CD8-positive, alpha-beta T cell (primary cell): ENCODE measurements at regions of chr4 and their contacts with region 1.

Region 1: GRCh38 chr4:177250056-177250696 is 59.5 kb upstream of the NEIL3 start:
- DNase-seq: peak; percentile 38 to 74 (median 55)
- ATAC-seq: peak; percentile 99
- H3K4me3 ChIP-seq: no peak overlapping the region
- H3K4me3 Mint-ChIP-seq: no peak overlapping the region
- H3K27ac ChIP-seq: no peak overlapping the region
- H3K27ac Mint-ChIP-seq: no peak overlapping the region
- H3K4me1 ChIP-seq: no peaks in the 10 kb centered on the region
- H3K4me1 Mint-ChIP-seq: peaks cover 11% of the 10 kb centered on the region
- H3K27me3 ChIP-seq: no peaks in the 10 kb centered on the region
- H3K27me3 Mint-ChIP-seq: peaks cover 9% of the 10 kb centered on the region
- CTCF ChIP-seq: peak; percentile 96

Region 2: DNA sequence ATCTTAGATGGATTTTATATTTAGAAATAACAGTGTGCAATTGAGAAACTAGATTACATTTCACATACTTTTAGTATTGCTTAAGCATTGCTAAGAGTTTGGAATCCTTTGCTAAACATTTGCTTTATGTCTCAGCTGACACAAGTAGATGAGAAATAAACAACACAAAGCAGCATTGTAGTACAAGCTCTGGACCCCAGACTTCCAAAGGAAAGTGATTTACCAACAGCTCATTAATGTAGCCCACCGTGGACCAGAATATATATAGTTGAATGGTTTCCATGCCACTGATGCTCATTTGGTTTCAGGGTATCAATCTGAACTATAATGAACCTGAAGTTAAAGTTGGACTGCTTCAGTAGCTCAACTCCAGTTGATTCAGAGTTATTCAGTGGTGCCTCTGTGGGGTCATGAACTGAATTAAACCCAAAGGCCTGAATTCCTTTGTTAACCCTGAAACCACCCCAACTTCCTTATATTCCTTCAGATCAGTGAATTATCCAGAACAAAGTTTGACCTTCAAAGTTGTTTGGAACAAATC is 72.6 kb before region 1 on chr4:
- CTCF ChIA-PET with region 1: no interaction called
- POLR2A ChIA-PET with region 1: no interaction called
- intact Hi-C with region 1: no loop called
- DNase-seq: no peak
- ATAC-seq: no peak
- H3K4me3 ChIP-seq: no peak overlapping the region
- H3K4me3 Mint-ChIP-seq: no peak overlapping the region
- H3K27ac ChIP-seq: no peak overlapping the region
- H3K27ac Mint-ChIP-seq: no peak overlapping the region
- H3K4me1 ChIP-seq: no peaks in the 10 kb centered on the region
- H3K4me1 Mint-ChIP-seq: no peaks in the 10 kb centered on the region
- H3K27me3 ChIP-seq: no peaks in the 10 kb centered on the region
- H3K27me3 Mint-ChIP-seq: no peaks in the 10 kb centered on the region
- CTCF ChIP-seq: no peak

Region 3: DNA sequence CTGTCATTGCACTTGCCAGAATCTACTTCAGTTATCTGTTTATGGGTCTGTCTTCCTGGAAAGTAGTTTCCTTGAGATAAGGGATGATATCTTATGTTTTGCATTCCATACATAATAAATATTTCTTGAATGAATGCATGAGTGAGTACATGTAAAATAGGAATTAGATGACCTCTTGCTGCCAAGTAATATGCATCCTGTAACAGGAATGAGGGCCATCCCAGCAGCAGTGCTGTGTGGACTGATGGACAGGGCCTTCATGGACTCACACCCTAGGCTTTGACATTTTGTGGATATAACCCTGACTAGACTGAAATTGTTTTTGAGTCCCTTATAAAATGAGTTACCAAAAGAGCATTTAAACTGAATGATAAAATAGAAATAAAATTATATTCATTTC is 17.7 kb before region 1 on chr4:
- CTCF ChIA-PET with region 1: no interaction called
- POLR2A ChIA-PET with region 1: no interaction called
- intact Hi-C with region 1: no loop called
- DNase-seq: no peak
- ATAC-seq: no peak
- H3K4me3 ChIP-seq: no peak overlapping the region
- H3K4me3 Mint-ChIP-seq: no peak overlapping the region
- H3K27ac ChIP-seq: no peak overlapping the region
- H3K27ac Mint-ChIP-seq: no peak overlapping the region
- H3K4me1 ChIP-seq: no peaks in the 10 kb centered on the region
- H3K4me1 Mint-ChIP-seq: peaks cover 9% of the 10 kb centered on the region
- H3K27me3 ChIP-seq: no peaks in the 10 kb centered on the region
- H3K27me3 Mint-ChIP-seq: no peaks in the 10 kb centered on the region
- CTCF ChIP-seq: no peak

Region 4: DNA sequence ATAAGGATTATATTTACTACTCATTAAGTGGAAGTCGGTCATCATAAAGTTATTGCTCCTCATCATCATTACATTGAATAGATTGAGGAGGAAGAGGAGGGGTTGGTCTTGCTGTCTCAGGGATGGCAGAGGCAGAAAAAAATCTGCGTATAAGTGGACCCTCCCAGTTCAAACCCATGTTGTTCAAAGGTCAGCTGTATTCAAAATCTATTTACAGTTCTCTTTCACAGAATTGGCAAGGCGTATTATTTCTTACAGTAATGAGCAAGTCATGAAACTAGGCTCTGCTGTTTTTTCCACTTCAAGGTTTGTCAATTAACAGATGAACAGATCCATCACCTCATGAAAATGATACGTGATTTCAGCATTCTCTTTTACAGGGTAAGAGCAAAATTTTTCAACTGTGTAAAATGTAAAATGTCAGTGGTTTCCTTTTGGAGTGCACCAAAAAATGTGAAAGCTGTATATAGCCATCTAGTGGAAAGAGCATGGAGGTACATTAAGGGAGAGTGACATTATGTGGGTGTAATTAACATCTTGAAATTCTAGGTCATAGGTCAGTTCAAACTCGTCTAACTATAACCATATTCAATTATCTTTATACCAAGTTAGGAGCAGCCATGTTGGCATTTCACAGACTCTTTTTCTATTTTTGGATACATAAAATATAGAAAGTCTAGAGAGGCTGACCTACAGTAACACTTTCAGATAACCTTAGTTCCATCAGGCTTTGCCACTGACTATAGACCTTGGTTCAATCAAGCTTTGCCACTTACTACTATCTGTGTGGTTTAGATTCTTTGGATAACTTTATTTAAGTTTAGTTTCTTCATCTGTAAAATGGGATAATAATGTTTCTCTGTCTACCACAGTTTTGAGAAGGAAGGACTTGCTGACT is 89.5 kb after region 1 on chr4:
- CTCF ChIA-PET with region 1: interaction called, 18 read pairs
- POLR2A ChIA-PET with region 1: no interaction called
- intact Hi-C with region 1: loop called (anchors 1 kb)
- DNase-seq: peak in 2 of 9 experiments; percentile 48 to 65
- ATAC-seq: peak; percentile 88
- H3K4me3 ChIP-seq: no peak overlapping the region
- H3K4me3 Mint-ChIP-seq: peak overlapping the region; percentile 42
- H3K27ac ChIP-seq: no peak overlapping the region
- H3K27ac Mint-ChIP-seq: no peak overlapping the region
- H3K4me1 ChIP-seq: no peaks in the 10 kb centered on the region
- H3K4me1 Mint-ChIP-seq: peaks cover 5% of the 10 kb centered on the region
- H3K27me3 ChIP-seq: no peaks in the 10 kb centered on the region
- H3K27me3 Mint-ChIP-seq: no peaks in the 10 kb centered on the region
- CTCF ChIP-seq: peak; percentile 60

Region 5: GRCh38 chr4:177434626-177435025 is 184.4 kb after region 1 on chr4:
- CTCF ChIA-PET with region 1: no interaction called
- POLR2A ChIA-PET with region 1: no interaction called
- intact Hi-C with region 1: no loop called
- DNase-seq: no peak
- ATAC-seq: no peak
- H3K4me3 ChIP-seq: no peak overlapping the region
- H3K4me3 Mint-ChIP-seq: no peak overlapping the region
- H3K27ac ChIP-seq: no peak overlapping the region
- H3K27ac Mint-ChIP-seq: no peak overlapping the region
- H3K4me1 ChIP-seq: no peaks in the 10 kb centered on the region
- H3K4me1 Mint-ChIP-seq: peaks cover 2% of the 10 kb centered on the region
- H3K27me3 ChIP-seq: no peaks in the 10 kb centered on the region
- H3K27me3 Mint-ChIP-seq: no peaks in the 10 kb centered on the region
- CTCF ChIP-seq: no peak

Region 6: GRCh38 chr4:177569434-177569833 is 319.3 kb after region 1 on chr4:
- CTCF ChIA-PET with region 1: no interaction called
- POLR2A ChIA-PET with region 1: no interaction called
- intact Hi-C with region 1: loop called in 1 of 2 experiments (anchors 10 kb)
- DNase-seq: no peak
- ATAC-seq: no peak
- H3K4me3 ChIP-seq: no peak overlapping the region
- H3K4me3 Mint-ChIP-seq: no peak overlapping the region
- H3K27ac ChIP-seq: no peak overlapping the region
- H3K27ac Mint-ChIP-seq: no peak overlapping the region
- H3K4me1 ChIP-seq: no peaks in the 10 kb centered on the region
- H3K4me1 Mint-ChIP-seq: no peaks in the 10 kb centered on the region
- H3K27me3 ChIP-seq: no peaks in the 10 kb centered on the region
- H3K27me3 Mint-ChIP-seq: no peaks in the 10 kb centered on the region
- CTCF ChIP-seq: no peak